SK-N-SH (cell line): ENCODE measurements at regions of chr6 and their contacts with region 1.

Region 1: GRCh38 chr6:44074439-44075136 is 52.7 kb downstream of the MRPL14 start:
- DNase-seq: peak; percentile 83
- H3K4me3 ChIP-seq: peak overlapping the region in 1 of 2 experiments; percentile 16; a peak in 1 of 4 replicates
- H3K27ac ChIP-seq: peak overlapping the region in 1 of 2 experiments; percentile 99; a peak in 2 of 4 replicates
- H3K4me1 ChIP-seq: peaks cover 35 to 70% of the 10 kb centered on the region in 2 experiments
- H3K27me3 ChIP-seq: no peaks in the 10 kb centered on the region
- CTCF ChIP-seq: peak; percentile 91
- EP300 ChIP-seq: peak in 1 of 2 experiments; percentile 8; a peak in 1 of 4 replicates
- RAD21 ChIP-seq: peak; percentile 88

Region 2: DNA sequence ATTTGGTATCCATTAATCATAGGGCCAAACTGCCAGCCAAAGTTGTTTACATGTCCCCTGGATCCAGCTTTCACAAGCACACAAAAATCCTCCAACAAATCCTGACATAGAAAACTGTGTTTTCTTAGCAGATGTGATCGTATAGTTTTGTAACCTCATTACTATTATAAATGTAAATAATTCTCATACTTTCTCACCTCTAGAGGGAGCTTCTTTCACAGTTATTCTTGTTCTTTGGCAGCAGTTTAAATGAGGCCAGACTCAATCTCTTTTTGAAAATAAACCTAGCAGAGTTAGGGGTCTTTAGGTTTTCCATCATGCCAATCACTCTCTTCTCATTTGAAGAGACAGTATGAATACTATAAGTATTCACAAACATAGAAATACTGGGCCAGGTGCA is 688.1 kb before region 1 on chr6:
- CTCF ChIA-PET with region 1: no interaction called
- POLR2A ChIA-PET with region 1: no interaction called
- DNase-seq: peak; percentile 52
- H3K4me3 ChIP-seq: no peak overlapping the region
- H3K27ac ChIP-seq: no peak overlapping the region
- H3K4me1 ChIP-seq: peaks cover 0 to 2% of the 10 kb centered on the region in 2 experiments; a peak in 1 of 4 replicates
- H3K27me3 ChIP-seq: no peaks in the 10 kb centered on the region; the same call in 1 of the 2 replicates
- CTCF ChIP-seq: peak; percentile 76
- EP300 ChIP-seq: no peak
- RAD21 ChIP-seq: peak; percentile 77

Region 3: GRCh38 chr6:43723737-43724295 is 350.8 kb before region 1 on chr6:
- CTCF ChIA-PET with region 1: interaction called, 67 read pairs
- POLR2A ChIA-PET with region 1: no interaction called
- DNase-seq: peak; percentile 77
- H3K4me3 ChIP-seq: no peak overlapping the region; a peak in 1 of 4 replicates
- H3K27ac ChIP-seq: no peak overlapping the region
- H3K4me1 ChIP-seq: peaks cover 0 to 13% of the 10 kb centered on the region in 2 experiments; a peak in 2 of 4 replicates
- H3K27me3 ChIP-seq: no peaks in the 10 kb centered on the region
- CTCF ChIP-seq: peak; percentile 62
- EP300 ChIP-seq: no peak
- RAD21 ChIP-seq: peak; percentile 83

Region 4: DNA sequence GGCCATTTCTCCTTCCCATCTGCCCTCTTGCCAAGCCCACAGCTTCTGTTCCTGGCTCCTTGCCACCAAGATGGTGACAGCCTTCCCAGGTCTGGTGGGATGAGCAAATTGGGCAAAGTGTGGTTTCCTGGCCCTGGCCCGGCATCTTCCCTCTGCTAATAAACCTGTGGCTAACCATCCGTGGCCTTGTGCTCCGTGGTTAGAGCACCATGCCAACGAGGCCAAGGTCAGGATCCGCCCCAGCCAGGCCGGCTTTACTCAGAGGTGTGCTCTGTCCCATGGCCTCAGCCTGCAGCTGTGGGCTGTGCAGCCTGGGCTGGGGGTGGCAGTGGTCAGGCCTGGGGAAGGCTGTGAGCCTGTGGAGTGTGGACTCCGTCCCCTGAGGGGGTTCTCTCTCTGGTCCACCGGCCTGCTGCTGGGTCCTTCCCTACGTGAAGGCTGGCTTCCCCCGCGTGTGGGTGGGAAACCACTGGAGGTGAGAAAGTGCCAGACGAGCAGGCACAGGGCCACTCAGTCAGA is 187.2 kb before region 1 on chr6:
- CTCF ChIA-PET with region 1: no interaction called
- POLR2A ChIA-PET with region 1: no interaction called
- DNase-seq: no peak
- H3K4me3 ChIP-seq: no peak overlapping the region
- H3K27ac ChIP-seq: no peak overlapping the region
- H3K4me1 ChIP-seq: peaks cover 0 to 28% of the 10 kb centered on the region in 2 experiments; a peak in 1 of 4 replicates
- H3K27me3 ChIP-seq: no peaks in the 10 kb centered on the region
- CTCF ChIP-seq: no peak
- EP300 ChIP-seq: no peak
- RAD21 ChIP-seq: no peak

Region 5: DNA sequence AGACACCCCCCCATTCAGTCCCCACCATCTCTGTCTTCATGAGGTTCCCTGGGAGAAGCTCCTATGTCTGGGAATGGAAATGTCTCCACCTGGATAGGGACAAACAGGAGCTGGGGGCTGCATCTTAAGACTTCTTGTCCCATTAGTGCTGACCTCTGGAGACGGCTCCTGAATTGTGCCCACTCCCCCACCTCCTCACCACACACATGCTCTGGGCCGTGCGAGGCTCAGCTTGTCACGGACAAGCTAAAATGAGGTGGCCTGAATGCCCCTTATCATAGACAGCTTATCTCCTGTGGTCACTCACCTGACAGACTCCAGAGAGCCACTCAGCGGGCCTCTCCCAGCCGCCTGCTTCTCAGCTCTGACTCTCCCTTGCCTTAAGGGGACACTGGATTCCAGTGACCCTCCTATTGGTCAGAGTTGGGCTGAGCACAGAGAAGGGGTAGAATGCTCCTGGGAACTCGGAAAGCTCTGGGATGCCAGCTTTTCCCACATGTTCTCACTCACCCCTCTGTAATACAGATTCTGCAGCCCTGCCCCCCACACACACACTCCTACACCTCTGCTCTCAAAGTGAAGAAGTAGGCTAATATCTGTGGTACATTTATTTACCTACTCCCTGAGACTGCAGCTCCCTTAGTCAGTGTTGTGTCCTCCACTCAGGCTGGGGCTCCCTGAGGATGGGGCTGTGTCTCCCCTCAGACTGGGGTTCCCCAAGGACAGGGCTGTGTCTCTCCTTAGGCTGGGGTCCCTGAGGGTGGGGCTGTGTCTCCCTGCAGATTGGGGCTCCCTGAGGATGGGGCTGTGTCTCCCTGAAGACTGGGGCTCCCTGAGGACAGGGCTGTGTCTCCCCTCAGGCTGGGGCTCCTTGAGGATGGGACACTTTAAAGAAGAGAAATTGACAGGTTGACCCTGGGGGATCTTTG is 137.1 kb before region 1 on chr6:
- CTCF ChIA-PET with region 1: interaction called, 38 read pairs
- POLR2A ChIA-PET with region 1: interaction called, 6 read pairs
- DNase-seq: peak; percentile 67
- H3K4me3 ChIP-seq: no peak overlapping the region
- H3K27ac ChIP-seq: peak overlapping the region in 1 of 2 experiments; percentile 100; a peak in 2 of 4 replicates
- H3K4me1 ChIP-seq: peaks cover 0 to 93% of the 10 kb centered on the region in 2 experiments; a peak in 3 of 4 replicates
- H3K27me3 ChIP-seq: no peaks in the 10 kb centered on the region
- CTCF ChIP-seq: no peak
- EP300 ChIP-seq: peak in 1 of 2 experiments; percentile 43; a peak in 2 of 4 replicates
- RAD21 ChIP-seq: 0 out of 2 replicates have a peak, but pooled peaks have one; percentile 17

Region 6: DNA sequence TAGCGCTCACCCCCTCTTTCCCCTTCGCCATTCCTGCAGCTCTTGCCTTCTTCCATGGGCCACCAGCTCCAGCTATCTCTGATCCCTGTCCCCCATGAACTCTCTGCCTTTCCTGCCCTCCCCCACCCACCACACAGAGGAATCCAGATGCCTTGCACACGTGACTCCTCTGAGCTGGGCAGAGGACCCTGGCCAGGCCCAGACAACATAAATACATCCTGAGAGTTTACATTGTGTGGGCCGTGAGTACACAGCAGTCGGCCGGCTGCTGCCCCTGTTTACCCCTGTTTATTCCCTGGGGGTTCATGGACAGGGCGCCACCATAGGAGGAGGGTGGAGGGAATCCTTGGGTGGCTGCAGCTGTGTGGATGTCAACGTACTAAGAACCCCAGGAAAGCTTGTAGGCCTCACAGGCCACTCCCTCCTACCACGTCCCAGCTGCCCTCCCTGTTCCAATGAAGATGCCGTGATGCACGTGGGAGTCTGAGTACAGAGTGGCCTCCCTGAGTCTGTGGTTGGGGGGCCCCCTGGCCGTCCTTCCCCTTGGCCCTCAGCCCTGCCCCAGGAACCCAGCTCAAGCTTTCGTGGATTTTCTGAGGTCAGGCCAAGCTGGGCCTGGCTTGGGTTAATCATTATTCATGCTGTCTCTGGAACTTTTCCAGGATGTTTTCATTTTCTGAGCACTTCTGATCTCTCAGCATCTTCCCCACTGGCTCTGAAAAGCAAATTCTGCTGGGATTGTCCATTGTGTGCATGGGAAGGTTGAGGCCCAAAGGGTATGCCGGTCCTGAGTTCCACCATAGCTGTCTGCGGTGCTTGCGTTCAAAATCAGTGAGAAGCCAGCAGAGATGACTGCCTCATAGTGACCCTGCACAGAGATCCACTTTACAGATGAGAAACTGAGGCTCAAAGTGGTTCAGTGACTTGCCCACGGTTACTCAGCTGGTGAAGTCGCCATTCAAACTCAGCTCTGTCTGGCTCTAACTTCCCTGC is 83.7 kb before region 1 on chr6:
- CTCF ChIA-PET with region 1: interaction called, 13 read pairs
- POLR2A ChIA-PET with region 1: interaction called, 11 read pairs
- DNase-seq: peak; percentile 83
- H3K4me3 ChIP-seq: no peak overlapping the region
- H3K27ac ChIP-seq: peak overlapping the region in 1 of 2 experiments; percentile 98; a peak in 3 of 4 replicates
- H3K4me1 ChIP-seq: peaks cover 17 to 68% of the 10 kb centered on the region in 2 experiments; a peak in 2 of 4 replicates
- H3K27me3 ChIP-seq: no peaks in the 10 kb centered on the region
- CTCF ChIP-seq: no peak
- EP300 ChIP-seq: peak in 1 of 2 experiments; percentile 59; a peak in 2 of 4 replicates
- RAD21 ChIP-seq: peak; percentile 22; the same call in 1 of the 2 replicates

Region 7: DNA sequence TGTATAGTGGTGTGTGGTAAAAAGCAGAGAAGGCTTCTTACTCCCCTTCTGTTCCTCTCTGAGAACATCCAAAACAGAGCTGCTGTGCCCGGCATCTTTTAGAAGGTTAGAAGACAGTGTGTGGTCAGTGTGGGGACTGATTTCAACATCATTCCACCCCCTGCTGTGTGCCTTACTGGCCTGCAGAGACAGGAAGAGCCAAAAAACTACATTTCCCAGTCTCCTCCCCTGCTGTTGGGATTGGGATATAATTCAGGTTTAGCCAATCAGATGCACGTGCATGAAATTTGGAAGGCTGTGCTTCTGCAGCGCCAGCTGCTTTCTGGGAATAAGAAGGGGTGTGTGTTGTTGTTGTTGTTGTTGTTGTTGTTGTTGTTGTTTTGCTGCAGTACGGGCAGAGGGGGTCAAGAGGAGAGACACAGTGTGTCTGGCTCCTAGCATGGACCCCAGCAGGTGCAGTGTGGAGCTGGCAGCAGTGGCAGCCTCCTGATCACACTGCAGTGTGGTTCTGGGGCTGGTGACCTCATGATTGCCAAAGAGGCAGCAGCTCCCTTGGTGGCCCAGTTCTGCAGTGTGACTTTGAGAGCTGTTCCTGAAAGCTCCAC is 22.1 kb before region 1 on chr6:
- CTCF ChIA-PET with region 1: interaction called, 203 read pairs
- POLR2A ChIA-PET with region 1: interaction called, 60 read pairs
- DNase-seq: peak; percentile 60
- H3K4me3 ChIP-seq: no peak overlapping the region
- H3K27ac ChIP-seq: peak overlapping the region; percentile 68 to 94; a peak in 3 of 4 replicates
- H3K4me1 ChIP-seq: peaks cover 66 to 99% of the 10 kb centered on the region in 2 experiments
- H3K27me3 ChIP-seq: no peaks in the 10 kb centered on the region
- CTCF ChIP-seq: no peak
- EP300 ChIP-seq: no peak
- RAD21 ChIP-seq: no peak